ENCODE measurements at regions of chr1 and their contacts with region 1.

Region 1: DNA sequence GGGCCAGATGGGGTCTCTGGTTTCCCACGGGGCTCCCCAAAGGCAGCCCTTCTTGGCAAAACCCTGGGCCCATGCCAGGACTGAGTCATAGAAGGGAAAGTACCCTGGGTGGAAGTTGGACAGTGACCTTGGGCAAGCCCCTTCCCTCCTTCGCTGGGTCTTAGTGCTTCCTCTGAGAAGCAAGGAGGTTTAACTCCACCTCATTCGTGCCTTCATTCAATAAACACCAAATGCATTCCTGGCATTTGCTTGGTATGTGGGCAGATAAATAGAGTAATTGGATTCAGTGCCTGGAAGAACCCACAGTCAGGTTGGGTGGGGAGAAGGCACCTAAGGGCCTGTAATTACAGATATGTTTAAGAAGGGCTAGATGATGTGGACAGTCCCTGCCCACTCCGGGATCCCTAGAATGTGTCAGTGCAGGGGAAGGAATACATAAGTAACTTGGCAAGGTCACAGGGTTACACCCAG is 36.3 kb upstream of the CITED4 start:
- DNase-seq: peak; percentile 74
- H3K4me3 Mint-ChIP-seq: no peak overlapping the region
- H3K27ac Mint-ChIP-seq: peak overlapping the region; percentile 68
- H3K4me1 Mint-ChIP-seq: peaks cover 25% of the 10 kb centered on the region
- H3K27me3 Mint-ChIP-seq: no peaks in the 10 kb centered on the region
- CTCF ChIP-seq: no peak

Region 2: DNA sequence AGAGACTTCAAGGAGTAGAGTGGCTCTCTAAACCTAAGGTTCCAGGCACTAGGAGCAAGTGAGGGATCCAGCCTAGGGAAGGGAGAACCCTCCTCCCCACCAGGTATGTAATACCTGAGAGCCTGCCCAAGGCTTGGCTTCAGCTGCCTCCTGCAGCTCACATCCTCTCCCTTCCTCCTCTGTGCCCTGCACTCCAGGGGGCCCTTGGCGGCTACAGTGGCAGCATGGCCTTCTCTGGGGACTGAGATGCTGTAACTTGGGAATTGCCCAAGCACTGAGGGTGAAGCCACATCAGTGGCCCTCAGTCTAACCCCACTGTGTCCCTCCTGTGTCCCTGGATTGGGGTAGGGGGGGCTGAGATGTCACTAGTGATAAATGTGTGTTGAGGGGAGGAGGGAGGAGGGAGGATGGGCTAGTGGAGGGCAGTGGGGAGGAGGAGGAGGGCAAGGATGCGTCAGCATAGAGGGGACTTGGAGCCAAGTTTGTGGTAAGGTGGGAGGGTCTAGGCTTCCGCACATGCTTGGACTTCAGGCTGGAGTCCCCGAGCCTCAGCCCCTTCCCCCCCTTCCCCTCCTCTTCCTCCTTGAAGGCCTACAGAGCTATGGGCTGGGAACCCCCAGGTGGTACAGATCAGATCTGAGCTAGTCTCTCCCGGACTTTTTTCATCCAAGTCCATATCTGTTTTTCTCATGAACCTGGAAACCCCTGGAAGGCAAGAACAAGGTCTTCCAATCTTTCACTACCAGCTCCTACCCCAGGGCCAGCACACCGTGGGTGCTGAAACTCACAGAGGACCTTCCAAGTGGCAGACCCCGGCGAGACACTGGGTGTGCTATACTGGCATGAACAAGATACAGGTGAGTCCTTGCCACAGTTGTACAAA is 598.9 kb before region 1 on chr1:
- CTCF ChIA-PET with region 1: no interaction called
- POLR2A ChIA-PET with region 1: no interaction called
- intact Hi-C with region 1: no loop called
- DNase-seq: no peak
- H3K4me3 Mint-ChIP-seq: no peak overlapping the region
- H3K27ac Mint-ChIP-seq: no peak overlapping the region
- H3K4me1 Mint-ChIP-seq: no peaks in the 10 kb centered on the region
- H3K27me3 Mint-ChIP-seq: no peaks in the 10 kb centered on the region
- CTCF ChIP-seq: no peak

Region 3: DNA sequence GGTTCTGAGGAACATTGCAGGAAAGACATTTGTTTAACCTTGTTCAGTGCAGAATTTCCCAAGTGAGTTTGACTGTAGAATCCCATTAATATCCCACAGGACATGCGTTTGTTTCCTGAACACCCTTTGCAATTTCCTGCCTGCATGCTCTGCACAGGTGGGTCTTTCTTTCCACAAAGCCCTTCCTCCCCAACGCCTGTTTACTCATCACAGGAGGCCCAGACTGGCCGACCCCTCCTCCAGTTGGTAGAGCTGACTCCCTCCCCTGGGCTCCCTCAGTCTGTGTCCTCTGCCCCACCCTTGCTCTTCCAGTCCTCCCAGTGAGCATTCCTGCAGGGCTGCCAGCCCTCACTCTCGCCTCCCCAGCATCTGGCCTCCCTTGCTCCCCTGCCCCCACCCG is 33.6 kb after region 1 on chr1:
- CTCF ChIA-PET with region 1: no interaction called
- POLR2A ChIA-PET with region 1: interaction called, 6 read pairs
- intact Hi-C with region 1: loop called (anchors 5 kb)
- DNase-seq: no peak
- H3K4me3 Mint-ChIP-seq: no peak overlapping the region
- H3K27ac Mint-ChIP-seq: no peak overlapping the region
- H3K4me1 Mint-ChIP-seq: peaks cover 13% of the 10 kb centered on the region
- H3K27me3 Mint-ChIP-seq: no peaks in the 10 kb centered on the region
- CTCF ChIP-seq: no peak

Region 4: GRCh38 chr1:40939320-40940059 is 41.0 kb after region 1 on chr1:
- CTCF ChIA-PET with region 1: no interaction called
- POLR2A ChIA-PET with region 1: interaction called, 10 read pairs
- intact Hi-C with region 1: loop called (anchors 5 kb)
- DNase-seq: peak; percentile 71
- H3K4me3 Mint-ChIP-seq: no peak overlapping the region
- H3K27ac Mint-ChIP-seq: no peak overlapping the region
- H3K4me1 Mint-ChIP-seq: peaks cover 25% of the 10 kb centered on the region
- H3K27me3 Mint-ChIP-seq: no peaks in the 10 kb centered on the region
- CTCF ChIP-seq: no peak